ENCODE measurements at regions of chr10 and their contacts with region 1.

Region 1: DNA sequence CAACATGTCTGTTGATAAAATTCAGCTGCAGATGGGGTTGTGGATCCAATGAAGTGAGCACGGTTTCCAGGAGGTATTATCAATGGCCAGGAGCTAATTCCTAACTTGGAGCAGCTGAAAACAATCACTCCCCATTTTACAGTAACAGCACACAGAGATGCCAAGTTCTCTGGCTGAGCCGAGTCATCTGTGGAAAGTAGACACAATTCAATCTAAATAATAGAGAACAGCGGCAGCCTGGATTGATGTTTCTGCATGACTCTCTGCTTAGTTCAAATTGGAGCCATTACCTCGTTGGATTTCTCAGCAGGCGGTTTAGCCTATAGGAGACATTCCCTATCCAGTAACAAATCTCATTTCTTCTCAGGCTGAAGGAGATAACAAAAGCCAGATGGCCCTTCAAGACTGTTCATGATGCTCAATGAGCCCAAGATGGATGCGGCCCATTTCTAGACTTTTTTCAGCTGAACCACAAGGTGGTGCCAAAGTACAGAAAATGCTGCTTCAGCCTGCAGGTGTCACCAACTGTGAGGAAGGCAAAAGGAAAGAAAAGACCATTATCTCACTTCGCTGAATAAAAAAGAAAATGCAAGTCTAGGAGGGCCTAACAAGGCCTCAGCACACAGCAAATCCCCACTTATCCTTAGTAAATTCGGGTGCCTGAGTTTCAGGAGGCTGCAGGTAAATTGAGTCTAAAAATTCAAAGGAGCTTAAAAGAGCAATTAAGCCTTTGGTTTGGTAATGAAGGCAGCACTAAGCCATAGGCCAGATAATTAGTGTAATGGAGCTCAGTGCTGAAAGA is 83.7 kb downstream of the SLC16A9 start:
- DNase-seq: peak; percentile 49 to 68
- H3K4me3 ChIP-seq: no peak overlapping the region
- H3K27ac ChIP-seq: no peak overlapping the region
- H3K4me1 ChIP-seq: no peaks in the 10 kb centered on the region
- H3K27me3 ChIP-seq: 0 out of 2 replicates have a peak, but pooled peaks cover 5% of the 10 kb centered on the region
- CTCF ChIP-seq: peak; percentile 95

Region 2: GRCh38 chr10:58531084-58531695 is 1094.7 kb before region 1 on chr10:
- CTCF ChIA-PET with region 1: interaction called, 13 read pairs
- POLR2A ChIA-PET with region 1: no interaction called
- intact Hi-C with region 1: loop called (anchors 5 kb)
- DNase-seq: peak; percentile 52 to 53
- H3K4me3 ChIP-seq: no peak overlapping the region
- H3K27ac ChIP-seq: no peak overlapping the region
- H3K4me1 ChIP-seq: no peaks in the 10 kb centered on the region
- H3K27me3 ChIP-seq: no peaks in the 10 kb centered on the region
- CTCF ChIP-seq: peak; percentile 88

Region 3: DNA sequence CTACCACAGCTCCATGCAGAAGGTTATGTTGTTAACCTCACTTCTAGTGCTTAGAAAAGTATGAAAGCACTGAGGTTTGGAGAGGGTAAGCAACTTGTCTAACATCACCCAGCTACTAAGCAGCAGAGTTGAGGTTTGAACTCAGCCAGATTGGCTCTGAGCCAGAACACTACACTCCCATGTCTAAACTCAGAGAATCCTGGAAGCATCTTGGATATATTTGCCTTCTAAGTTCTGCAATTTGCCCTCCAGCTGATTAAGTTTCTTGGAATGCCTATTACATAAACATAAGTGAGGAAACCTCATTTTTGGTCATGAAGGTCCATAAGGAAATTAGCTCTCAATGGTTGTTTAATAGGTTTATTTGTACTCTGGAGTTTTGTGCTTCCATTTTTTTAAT is 527.5 kb before region 1 on chr10:
- CTCF ChIA-PET with region 1: no interaction called
- POLR2A ChIA-PET with region 1: no interaction called
- intact Hi-C with region 1: no loop called
- DNase-seq: no peak
- H3K4me3 ChIP-seq: no peak overlapping the region
- H3K27ac ChIP-seq: no peak overlapping the region
- H3K4me1 ChIP-seq: no peaks in the 10 kb centered on the region
- H3K27me3 ChIP-seq: no peaks in the 10 kb centered on the region
- CTCF ChIP-seq: no peak

Region 4: DNA sequence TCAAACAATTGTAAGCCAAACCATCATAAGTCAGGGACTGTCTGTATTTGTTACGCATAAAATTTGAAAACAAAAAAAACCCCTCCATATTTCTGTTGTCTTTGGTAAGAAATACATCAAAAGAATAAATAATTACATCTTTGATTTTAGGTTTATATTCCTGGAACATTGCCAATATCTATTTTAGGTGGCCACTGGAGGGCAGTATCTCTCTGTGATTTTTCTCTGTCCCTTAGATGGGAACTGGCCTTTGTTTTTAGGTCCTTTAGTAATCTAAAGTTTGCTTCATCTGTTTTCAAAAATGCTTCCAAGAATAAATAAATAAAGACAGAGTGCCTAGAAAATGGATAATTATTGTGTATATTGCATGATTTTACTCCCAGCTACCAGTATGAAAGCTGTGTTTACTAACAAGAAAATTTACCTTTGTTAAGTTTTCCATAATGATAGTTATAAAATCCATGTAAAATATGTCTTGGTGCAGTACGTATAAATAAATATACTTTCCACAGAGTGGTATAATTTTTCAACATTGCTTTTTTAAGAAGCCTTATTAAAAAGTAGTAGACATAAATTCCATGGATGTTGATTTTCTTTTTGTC is 385.2 kb before region 1 on chr10:
- CTCF ChIA-PET with region 1: no interaction called
- POLR2A ChIA-PET with region 1: no interaction called
- intact Hi-C with region 1: loop called (anchors 1 kb)
- DNase-seq: peak in 1 of 2 experiments; percentile 4
- H3K4me3 ChIP-seq: no peak overlapping the region
- H3K27ac ChIP-seq: no peak overlapping the region
- H3K4me1 ChIP-seq: no peaks in the 10 kb centered on the region
- H3K27me3 ChIP-seq: no peaks in the 10 kb centered on the region
- CTCF ChIP-seq: peak; percentile 88

Region 5: DNA sequence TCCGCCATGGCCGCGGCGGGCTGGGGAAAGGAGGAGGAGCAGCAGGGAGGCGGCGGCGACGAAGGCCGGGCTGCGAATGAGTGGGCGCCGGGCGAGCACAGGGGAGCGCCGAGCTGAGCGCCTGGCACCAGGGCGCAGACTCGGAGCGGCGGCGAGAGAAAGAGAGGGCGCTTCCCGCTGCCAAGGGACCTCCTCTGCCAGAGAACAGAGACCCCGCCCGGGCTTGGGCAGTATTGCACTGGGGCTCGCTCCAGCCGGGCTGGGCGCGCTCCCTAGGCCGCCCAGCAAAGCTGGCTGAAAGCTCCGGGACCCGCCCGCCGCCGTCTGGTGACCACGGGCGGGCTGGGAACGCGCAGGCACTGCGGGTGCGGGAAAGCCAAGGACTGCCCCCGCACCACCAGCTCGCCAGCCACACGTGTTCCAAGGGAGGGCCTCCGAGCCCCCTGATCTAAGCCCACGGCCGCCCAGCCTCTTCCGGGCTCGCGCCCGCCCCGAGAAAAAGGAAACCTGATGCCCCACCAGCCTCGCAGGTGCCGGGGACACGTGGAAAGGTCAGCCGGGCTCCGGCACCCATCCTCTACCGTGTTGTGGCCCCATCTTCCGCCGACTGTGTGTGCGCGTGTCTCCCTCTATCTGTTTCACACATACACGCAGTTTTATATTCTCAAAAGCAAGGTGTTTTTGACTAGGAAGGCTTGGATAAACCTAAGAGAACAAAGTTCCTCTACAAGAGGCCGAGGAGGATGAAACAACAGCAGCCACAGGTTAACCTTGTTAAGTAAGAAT is 280.7 kb after region 1 on chr10 and contains the start of gene CCDC6:
- CTCF ChIA-PET with region 1: no interaction called
- POLR2A ChIA-PET with region 1: no interaction called
- intact Hi-C with region 1: loop called (anchors 1 kb)
- DNase-seq: peak; percentile 84 to 96
- H3K4me3 ChIP-seq: peak within 1 kb of the TSS; percentile 94
- H3K27ac ChIP-seq: peak within 1 kb of the TSS; percentile 97
- H3K4me1 ChIP-seq: peaks cover 52% of the 10 kb centered on the region
- H3K27me3 ChIP-seq: no peaks in the 10 kb centered on the region
- CTCF ChIP-seq: peak; percentile 66
- total RNA-seq, gene CCDC6: 66.2 and 91.9 TPM in 2 replicates

Region 6: GRCh38 chr10:60099998-60100747 is 474.3 kb after region 1 on chr10:
- CTCF ChIA-PET with region 1: no interaction called
- POLR2A ChIA-PET with region 1: no interaction called
- intact Hi-C with region 1: loop called (anchors 5 kb)
- DNase-seq: peak; percentile 15 to 59
- H3K4me3 ChIP-seq: no peak overlapping the region
- H3K27ac ChIP-seq: no peak overlapping the region
- H3K4me1 ChIP-seq: no peaks in the 10 kb centered on the region; the same call in 1 of the 2 replicates
- H3K27me3 ChIP-seq: no peaks in the 10 kb centered on the region
- CTCF ChIP-seq: peak; percentile 86

Region 7: DNA sequence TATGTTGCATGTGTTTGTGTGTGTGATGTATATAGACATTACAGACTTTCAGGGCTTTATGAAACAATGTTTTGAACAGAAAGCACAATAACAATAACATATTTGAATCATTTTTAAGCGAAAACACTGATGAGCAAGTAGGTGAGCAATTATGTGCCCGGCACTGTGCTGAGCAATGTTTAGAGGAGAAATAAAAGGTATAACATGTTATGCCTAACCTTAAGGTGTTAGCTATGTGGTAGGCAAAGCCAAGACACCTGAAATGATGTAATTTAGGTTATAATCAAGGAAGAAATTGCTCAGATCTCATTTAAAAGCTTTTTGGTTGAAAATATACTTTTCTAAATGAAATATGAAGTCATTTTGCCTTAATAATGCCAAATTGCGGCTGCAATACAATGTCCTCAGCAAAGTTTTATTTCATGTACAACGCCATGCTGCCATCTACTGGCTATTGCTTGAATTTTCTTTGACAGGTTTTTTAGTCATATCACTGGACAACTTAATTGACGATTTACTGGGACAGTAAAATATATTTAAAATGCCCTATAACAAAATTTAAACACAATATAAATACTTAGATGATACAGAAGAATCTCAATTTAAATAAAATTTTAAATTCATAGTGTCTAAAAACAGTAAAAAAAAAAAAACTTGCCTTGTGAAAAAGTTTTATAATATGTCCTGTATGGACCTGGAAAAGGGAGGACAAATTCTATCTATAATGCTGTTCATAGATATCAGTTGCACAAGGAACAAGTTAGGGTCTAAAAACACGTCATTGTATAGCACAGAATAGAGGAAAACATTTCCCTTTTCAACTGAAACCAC is 1021.3 kb after region 1 on chr10:
- CTCF ChIA-PET with region 1: no interaction called
- POLR2A ChIA-PET with region 1: no interaction called
- intact Hi-C with region 1: loop called (anchors 5 kb)
- DNase-seq: peak in 1 of 2 experiments; percentile 49
- H3K4me3 ChIP-seq: no peak overlapping the region
- H3K27ac ChIP-seq: no peak overlapping the region
- H3K4me1 ChIP-seq: peaks cover 13% of the 10 kb centered on the region
- H3K27me3 ChIP-seq: no peaks in the 10 kb centered on the region
- CTCF ChIP-seq: peak; percentile 92